GM12878 (cell line): ENCODE measurements at regions of chr9 and their contacts with region 1.

Region 1: GRCh38 chr9:12640016-12640587 is 53.1 kb upstream of the TYRP1 start:
- DNase-seq: no peak
- ATAC-seq: peak; percentile 78
- H3K4me3 ChIP-seq: no peak overlapping the region
- H3K27ac ChIP-seq: no peak overlapping the region
- H3K4me1 ChIP-seq: no peaks in the 10 kb centered on the region
- H3K27me3 ChIP-seq: no peaks in the 10 kb centered on the region
- CTCF ChIP-seq: peak; percentile 21 to 45 (median 40); a peak in 5 of 6 replicates
- EP300 ChIP-seq: no peak
- POLR2A ChIP-seq: no peak
- RAD21 ChIP-seq: peak; percentile 54

Region 2: DNA sequence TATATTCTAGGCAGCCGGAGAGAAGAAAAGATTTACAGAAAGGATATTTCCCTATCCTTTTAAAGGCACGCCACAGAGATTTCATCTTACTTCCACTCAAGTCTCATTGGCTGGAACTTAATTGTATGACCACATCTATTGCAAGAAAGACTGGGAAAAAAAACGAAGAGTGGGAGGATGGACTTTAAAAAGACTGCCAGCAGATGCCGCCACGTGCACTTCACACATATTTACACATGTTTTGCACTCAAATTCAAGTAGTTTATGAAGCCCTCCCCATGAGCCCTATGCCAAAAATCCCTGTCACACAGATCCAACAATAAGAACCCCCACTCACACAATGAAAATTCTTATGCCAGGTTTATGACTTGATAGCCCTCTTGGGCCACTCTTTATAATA is 85.5 kb before region 1 on chr9:
- CTCF ChIA-PET with region 1: interaction called, 21 read pairs
- POLR2A ChIA-PET with region 1: no interaction called
- RAD21 ChIA-PET with region 1: interaction called, 5 read pairs
- SMC1A ChIA-PET with region 1: interaction called, 4 read pairs
- in situ Hi-C with region 1: no loop called
- intact Hi-C with region 1: no loop called
- DNase-seq: no peak
- ATAC-seq: no peak
- H3K4me3 ChIP-seq: no peak overlapping the region
- H3K27ac ChIP-seq: no peak overlapping the region
- H3K4me1 ChIP-seq: no peaks in the 10 kb centered on the region
- H3K27me3 ChIP-seq: no peaks in the 10 kb centered on the region
- CTCF ChIP-seq: peak in 1 of 3 experiments; percentile 20; a peak in 2 of 6 replicates
- EP300 ChIP-seq: no peak
- POLR2A ChIP-seq: no peak
- RAD21 ChIP-seq: no peak